Activated CD8-positive, alpha-beta T cell treated with anti-CD3 and anti-CD28 coated beads, Interleukin-2, amount 10 ng/mL, durations not matched to agents 7 days and 5 days (primary cell): ENCODE measurements at regions of chr1 and their contacts with region 1.

Region 1: DNA sequence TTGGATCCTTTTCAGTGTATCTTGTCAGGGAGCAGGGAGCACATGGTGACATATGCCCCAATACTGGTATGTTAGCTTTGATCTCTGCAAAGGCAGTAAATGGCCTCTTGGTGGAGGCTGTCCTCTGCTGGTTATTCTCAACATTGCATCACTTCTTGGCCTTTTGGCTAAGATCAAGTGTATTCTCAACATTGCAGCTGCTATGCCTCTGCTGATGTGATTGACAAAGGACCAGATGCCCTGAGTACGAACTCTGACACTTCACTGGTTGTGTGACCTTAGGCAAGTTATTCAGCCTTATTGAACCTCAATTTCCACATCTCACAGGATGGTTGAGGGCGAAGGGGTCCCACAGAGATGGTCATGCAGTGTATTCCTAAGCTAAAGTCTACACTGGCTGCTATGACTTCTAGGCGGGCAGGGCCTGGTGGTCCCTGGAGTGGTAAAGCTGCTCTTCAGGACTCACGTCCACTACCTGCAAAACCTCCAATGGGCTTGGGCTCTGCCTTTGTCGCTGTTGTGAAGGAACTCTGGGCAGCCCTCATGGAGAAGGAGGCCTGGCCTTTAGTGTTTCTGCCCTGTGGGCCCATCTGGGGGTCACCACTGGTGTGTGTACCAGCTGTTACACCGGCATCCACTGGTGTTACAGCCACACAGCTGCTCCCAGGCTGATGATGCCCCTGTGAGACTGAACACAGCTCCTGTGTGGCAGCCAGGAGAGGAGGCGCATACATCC is 64.8 kb downstream of the DNTTIP2 start:
- DNase-seq: peak; percentile 71
- ATAC-seq: peak; percentile 72
- H3K4me3 Mint-ChIP-seq: no peak overlapping the region
- H3K27ac Mint-ChIP-seq: no peak overlapping the region
- H3K4me1 Mint-ChIP-seq: peaks cover 19% of the 10 kb centered on the region
- H3K27me3 Mint-ChIP-seq: no peaks in the 10 kb centered on the region

Region 2: GRCh38 chr1:93433407-93433961 is 380.7 kb before region 1 on chr1:
- CTCF ChIA-PET with region 1: interaction called, 12 read pairs
- POLR2A ChIA-PET with region 1: no interaction called
- DNase-seq: no peak
- ATAC-seq: no peak
- H3K4me3 Mint-ChIP-seq: no peak overlapping the region
- H3K27ac Mint-ChIP-seq: no peak overlapping the region
- H3K4me1 Mint-ChIP-seq: no peaks in the 10 kb centered on the region
- H3K27me3 Mint-ChIP-seq: peaks cover 23% of the 10 kb centered on the region

Region 3: DNA sequence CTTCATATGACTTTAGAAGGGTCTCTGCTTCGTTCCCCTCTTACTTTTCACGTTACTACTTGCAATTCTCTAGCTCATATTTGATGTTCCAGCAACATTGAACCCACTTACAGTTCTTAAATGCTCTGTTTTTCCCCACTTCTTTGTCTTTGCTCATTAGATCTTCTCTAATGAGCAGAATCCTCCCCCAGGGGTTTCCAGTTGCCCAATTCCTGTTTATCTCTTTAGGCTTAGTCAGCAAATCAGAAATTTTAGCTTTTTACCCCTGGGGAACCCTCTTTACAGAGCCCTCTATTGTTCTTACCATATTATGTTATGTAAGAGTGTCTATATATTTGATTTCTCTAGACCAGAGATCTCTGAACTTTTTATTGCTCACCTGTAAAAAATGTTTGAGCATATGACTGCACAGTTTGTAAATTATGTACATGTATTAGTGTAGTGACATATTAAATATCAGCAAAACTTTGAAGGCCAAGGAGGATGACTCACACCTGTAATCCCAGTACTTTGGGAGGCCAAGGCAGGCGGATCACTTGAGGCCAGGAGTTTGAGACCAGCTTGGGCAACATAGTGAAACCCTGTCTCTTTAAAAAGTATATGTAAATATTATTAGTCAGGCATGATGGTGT is 294.9 kb before region 1 on chr1:
- CTCF ChIA-PET with region 1: no interaction called
- POLR2A ChIA-PET with region 1: no interaction called
- DNase-seq: no peak
- ATAC-seq: no peak
- H3K4me3 Mint-ChIP-seq: no peak overlapping the region
- H3K27ac Mint-ChIP-seq: no peak overlapping the region
- H3K4me1 Mint-ChIP-seq: no peaks in the 10 kb centered on the region
- H3K27me3 Mint-ChIP-seq: peaks cover 4% of the 10 kb centered on the region

Region 4: DNA sequence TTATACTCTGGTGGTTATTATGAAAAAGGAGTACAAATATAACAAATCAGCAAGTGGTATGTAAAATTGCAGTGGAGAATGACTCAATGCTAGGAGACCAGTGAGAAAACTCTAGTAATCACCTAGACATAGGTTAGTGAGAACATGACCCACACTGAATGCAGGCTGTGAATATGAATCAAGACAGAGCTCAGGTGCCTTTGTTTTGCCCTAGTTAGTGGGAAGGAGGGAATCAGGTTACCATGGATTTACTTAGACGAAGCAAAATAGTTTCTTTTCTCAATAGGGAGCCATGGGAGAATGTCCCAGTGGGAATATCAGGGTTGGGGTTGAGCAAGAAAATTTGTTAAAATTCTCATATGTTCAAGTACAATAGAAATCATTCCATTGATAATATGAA is 105.6 kb after region 1 on chr1:
- CTCF ChIA-PET with region 1: no interaction called
- POLR2A ChIA-PET with region 1: no interaction called
- DNase-seq: no peak
- ATAC-seq: no peak
- H3K4me3 Mint-ChIP-seq: no peak overlapping the region
- H3K27ac Mint-ChIP-seq: no peak overlapping the region
- H3K4me1 Mint-ChIP-seq: no peaks in the 10 kb centered on the region
- H3K27me3 Mint-ChIP-seq: peaks cover 5% of the 10 kb centered on the region